Activated CD4-positive, alpha-beta T cell treated with anti-CD3 and anti-CD28 coated beads for 36 hours (primary cell): ENCODE measurements at regions of chr1 and their contacts with region 1.

Region 1: GRCh38 chr1:11925938-11926292 is 312 bp downstream of the KIAA2013 start:
- DNase-seq: no peak
- ATAC-seq: peak; percentile 21
- H3K4me3 Mint-ChIP-seq: peak overlapping the region; percentile 77
- H3K27ac Mint-ChIP-seq: no peak overlapping the region
- H3K4me1 Mint-ChIP-seq: peaks cover 30% of the 10 kb centered on the region
- H3K27me3 Mint-ChIP-seq: no peaks in the 10 kb centered on the region

Region 2: DNA sequence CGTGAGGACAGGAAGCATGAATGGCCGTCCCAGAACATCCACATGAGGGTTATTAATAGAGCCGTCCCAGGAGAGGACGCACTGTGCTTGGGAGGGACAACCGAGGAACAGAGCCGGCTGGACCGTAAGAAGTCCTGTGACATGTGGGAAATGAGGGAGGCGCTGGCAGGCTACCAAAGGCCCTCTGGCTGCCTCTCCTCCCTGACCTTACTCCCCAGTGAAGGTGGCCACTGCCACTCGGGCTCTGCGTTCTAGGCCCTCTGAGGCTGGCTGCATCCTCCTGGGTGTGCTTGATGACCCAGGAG is 51.7 kb before region 1 on chr1:
- CTCF ChIA-PET with region 1: no interaction called
- POLR2A ChIA-PET with region 1: no interaction called
- intact Hi-C with region 1: no loop called
- DNase-seq: no peak
- ATAC-seq: no peak
- H3K4me3 Mint-ChIP-seq: no peak overlapping the region
- H3K27ac Mint-ChIP-seq: no peak overlapping the region
- H3K4me1 Mint-ChIP-seq: no peaks in the 10 kb centered on the region
- H3K27me3 Mint-ChIP-seq: no peaks in the 10 kb centered on the region

Region 3: GRCh38 chr1:11979851-11980675 is 54.1 kb after region 1 on chr1 and contains the start of gene MFN2:
- CTCF ChIA-PET with region 1: no interaction called
- POLR2A ChIA-PET with region 1: no interaction called
- intact Hi-C with region 1: loop called in 1 of 2 experiments (anchors 1 kb)
- DNase-seq: peak; percentile 96
- ATAC-seq: peak; percentile 93
- H3K4me3 Mint-ChIP-seq: peak within 1 kb of the TSS; percentile 97
- H3K27ac Mint-ChIP-seq: peak within 1 kb of the TSS; percentile 94
- H3K4me1 Mint-ChIP-seq: peaks cover 36% of the 10 kb centered on the region
- H3K27me3 Mint-ChIP-seq: no peaks in the 10 kb centered on the region
- total RNA-seq, gene MFN2: 52.5 to 71.6 TPM